ENCODE measurements at regions of chr12 and their contacts with region 1.

Region 1: GRCh38 chr12:96489103-96490056 is at the start of gene CFAP54:
- DNase-seq: peak; percentile 97
- ATAC-seq: peak; percentile 86
- H3K4me3 Mint-ChIP-seq: peak within 1 kb of the TSS; percentile 80
- H3K27ac Mint-ChIP-seq: peak within 1 kb of the TSS; percentile 66
- H3K4me1 Mint-ChIP-seq: peaks cover 33% of the 10 kb centered on the region
- H3K27me3 Mint-ChIP-seq: no peaks in the 10 kb centered on the region
- total RNA-seq, gene CFAP54: 0.37 to 0.44 TPM

Region 2: DNA sequence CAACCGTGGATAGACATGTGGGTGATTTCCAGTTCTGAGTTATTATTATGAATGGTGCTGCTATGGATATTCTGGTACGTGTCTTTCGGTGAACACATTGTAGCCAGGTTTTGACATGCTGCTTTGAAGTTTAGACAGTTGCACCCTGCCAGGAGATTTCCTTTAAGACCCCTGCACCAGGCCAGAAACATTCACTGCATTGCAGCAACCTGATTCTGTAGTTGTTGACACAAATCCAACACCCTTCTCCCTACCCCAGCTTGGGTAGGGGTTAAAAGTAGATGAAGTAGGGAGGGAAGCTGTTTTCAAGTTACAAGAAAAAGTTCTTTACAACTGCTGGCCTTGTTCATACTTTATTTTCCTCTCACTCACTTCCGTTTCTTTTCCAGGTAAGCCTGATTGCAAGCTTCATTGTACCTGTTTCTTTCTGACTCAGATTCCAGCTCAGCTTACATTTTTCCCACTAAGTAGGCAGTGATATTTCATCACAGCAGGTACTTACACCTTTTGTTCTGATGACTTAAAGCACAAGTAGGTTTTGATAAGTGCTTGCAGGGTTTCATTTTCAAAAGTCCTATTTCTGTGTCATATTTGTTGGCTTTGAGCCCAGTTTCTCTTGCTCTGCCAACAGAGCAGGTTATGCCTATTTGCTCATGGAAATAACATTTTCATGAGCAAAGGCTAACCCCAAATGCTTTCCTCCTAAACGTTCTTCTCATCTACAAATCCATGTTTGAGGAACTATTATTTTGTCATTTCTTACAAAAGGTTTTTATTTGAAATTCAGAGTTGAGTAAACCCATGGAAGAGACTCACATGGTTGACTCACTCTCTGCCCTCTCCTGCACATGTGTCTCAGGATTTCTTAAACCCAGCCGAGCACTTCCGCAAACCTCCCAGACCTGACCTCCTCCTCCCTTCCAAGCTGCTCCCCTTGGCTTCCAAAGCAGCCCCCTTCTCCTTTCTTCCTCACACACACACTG is 441.9 kb before region 1 on chr12:
- CTCF ChIA-PET with region 1: interaction called, 3 read pairs
- POLR2A ChIA-PET with region 1: no interaction called
- intact Hi-C with region 1: loop called in 1 of 2 experiments (anchors 2 kb)
- DNase-seq: peak; percentile 30
- ATAC-seq: peak; percentile 83
- H3K4me3 Mint-ChIP-seq: peak overlapping the region; percentile 20
- H3K27ac Mint-ChIP-seq: peak overlapping the region; percentile 92
- H3K4me1 Mint-ChIP-seq: peaks cover 58% of the 10 kb centered on the region
- H3K27me3 Mint-ChIP-seq: no peaks in the 10 kb centered on the region

Region 3: GRCh38 chr12:96359328-96359727 is 130.1 kb before region 1 on chr12:
- CTCF ChIA-PET with region 1: no interaction called
- POLR2A ChIA-PET with region 1: no interaction called
- intact Hi-C with region 1: no loop called
- DNase-seq: no peak
- ATAC-seq: no peak
- H3K4me3 Mint-ChIP-seq: no peak overlapping the region
- H3K27ac Mint-ChIP-seq: no peak overlapping the region
- H3K4me1 Mint-ChIP-seq: peaks cover 73% of the 10 kb centered on the region
- H3K27me3 Mint-ChIP-seq: no peaks in the 10 kb centered on the region

Region 4: DNA sequence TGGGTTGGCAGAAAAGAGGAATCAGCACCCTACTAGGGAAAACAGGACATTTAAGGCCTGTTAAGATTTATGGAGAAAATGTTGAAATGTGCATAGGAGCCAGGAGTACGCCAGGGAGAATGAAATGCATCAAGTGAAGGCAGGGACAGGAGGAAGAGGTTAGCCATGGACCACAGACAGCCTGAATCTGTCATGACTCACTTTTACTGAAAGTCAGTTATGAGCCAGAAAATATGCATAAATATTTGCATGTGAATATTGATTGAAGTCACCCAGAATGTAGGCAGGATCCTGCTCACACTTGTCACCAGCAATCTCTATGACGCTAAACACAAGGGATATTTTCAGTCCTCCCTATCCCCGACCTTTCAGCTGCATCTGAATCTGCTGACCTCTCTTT is 64.1 kb before region 1 on chr12:
- CTCF ChIA-PET with region 1: interaction called, 3 read pairs
- POLR2A ChIA-PET with region 1: no interaction called
- intact Hi-C with region 1: loop called in 1 of 2 experiments (anchors 1 kb)
- DNase-seq: peak; percentile 65
- ATAC-seq: peak; percentile 80
- H3K4me3 Mint-ChIP-seq: no peak overlapping the region
- H3K27ac Mint-ChIP-seq: peak overlapping the region; percentile 63
- H3K4me1 Mint-ChIP-seq: peaks cover 47% of the 10 kb centered on the region
- H3K27me3 Mint-ChIP-seq: peaks cover 2% of the 10 kb centered on the region

Region 5: GRCh38 chr12:96445691-96446583 is 43.4 kb before region 1 on chr12:
- CTCF ChIA-PET with region 1: interaction called, 3 read pairs
- POLR2A ChIA-PET with region 1: interaction called, 5 read pairs
- intact Hi-C with region 1: loop called (anchors 1 kb)
- DNase-seq: peak; percentile 64
- ATAC-seq: peak; percentile 98
- H3K4me3 Mint-ChIP-seq: peak overlapping the region; percentile 56
- H3K27ac Mint-ChIP-seq: peak overlapping the region; percentile 96
- H3K4me1 Mint-ChIP-seq: peaks cover 45% of the 10 kb centered on the region
- H3K27me3 Mint-ChIP-seq: no peaks in the 10 kb centered on the region

Region 6: DNA sequence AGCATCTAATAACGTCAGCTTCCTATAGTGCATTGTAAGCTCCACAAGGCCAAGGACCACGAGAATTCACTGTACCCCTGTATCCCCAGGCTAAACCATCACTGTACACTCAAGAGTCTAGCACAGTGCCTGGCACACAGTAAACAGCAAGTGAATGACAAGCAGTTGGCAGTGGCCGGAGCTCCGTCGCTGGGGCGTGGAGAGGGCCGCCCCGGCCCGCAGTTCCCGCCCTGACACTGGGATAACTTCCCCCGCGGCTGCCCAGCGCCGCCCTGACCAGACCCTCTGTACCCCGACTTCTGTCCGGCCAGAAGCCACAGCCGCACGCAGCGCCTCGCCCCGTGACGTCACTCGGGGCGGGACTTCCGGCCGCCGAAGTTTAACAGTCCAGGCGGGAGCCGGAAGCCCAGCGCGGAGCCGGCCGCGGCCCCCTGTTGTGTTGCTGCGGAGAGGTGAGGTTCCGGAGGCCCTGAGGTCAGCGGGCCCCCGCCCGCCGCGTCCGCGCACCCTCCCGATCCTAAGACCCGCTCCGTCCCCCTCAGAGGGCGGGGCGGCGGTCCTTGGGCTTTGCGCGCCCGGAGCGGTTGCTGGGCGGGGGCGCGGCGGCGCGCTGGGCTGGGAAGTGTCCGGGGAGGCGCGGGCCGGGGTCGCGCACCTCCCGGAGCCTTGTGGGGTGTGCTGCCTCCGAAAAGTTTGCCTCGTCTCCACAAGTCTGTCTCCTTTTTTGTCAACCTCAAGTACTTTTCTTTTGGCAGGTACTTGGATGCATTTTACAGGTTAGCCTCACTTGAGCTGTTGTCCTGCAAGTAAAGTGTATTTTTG is 417.7 kb after region 1 on chr12 and contains the start of gene NEDD1:
- CTCF ChIA-PET with region 1: no interaction called
- POLR2A ChIA-PET with region 1: no interaction called
- intact Hi-C with region 1: loop called in 1 of 2 experiments (anchors 5 kb)
- DNase-seq: peak; percentile 89
- ATAC-seq: peak; percentile 84
- H3K4me3 Mint-ChIP-seq: peak within 1 kb of the TSS; percentile 84
- H3K27ac Mint-ChIP-seq: peak within 1 kb of the TSS; percentile 97
- H3K4me1 Mint-ChIP-seq: peaks cover 38% of the 10 kb centered on the region
- H3K27me3 Mint-ChIP-seq: no peaks in the 10 kb centered on the region
- total RNA-seq, gene NEDD1: 57.9 to 69.3 TPM

Measured in activated CD4-positive, alpha-beta T cell treated with anti-CD3 and anti-CD28 coated beads for 36 hours (primary cell).